ENCODE measurements at regions of chr4 and their contacts with region 1.

Region 1: GRCh38 chr4:140559696-140560095 is 9.1 kb downstream of the UCP1 start:
- DNase-seq: no peak
- ATAC-seq: no peak
- H3K4me3 ChIP-seq: no peak overlapping the region
- H3K4me1 ChIP-seq: no peaks in the 10 kb centered on the region
- CTCF ChIP-seq: no peak

Region 2: GRCh38 chr4:140296335-140297220 is 263.1 kb before region 1 on chr4:
- intact Hi-C with region 1: no loop called
- DNase-seq: peak in 1 of 3 donors; percentile 47
- ATAC-seq: peak; percentile 36
- H3K4me3 ChIP-seq: no peak overlapping the region
- H3K4me1 ChIP-seq: no peaks in the 10 kb centered on the region
- CTCF ChIP-seq: no peak

Region 3: DNA sequence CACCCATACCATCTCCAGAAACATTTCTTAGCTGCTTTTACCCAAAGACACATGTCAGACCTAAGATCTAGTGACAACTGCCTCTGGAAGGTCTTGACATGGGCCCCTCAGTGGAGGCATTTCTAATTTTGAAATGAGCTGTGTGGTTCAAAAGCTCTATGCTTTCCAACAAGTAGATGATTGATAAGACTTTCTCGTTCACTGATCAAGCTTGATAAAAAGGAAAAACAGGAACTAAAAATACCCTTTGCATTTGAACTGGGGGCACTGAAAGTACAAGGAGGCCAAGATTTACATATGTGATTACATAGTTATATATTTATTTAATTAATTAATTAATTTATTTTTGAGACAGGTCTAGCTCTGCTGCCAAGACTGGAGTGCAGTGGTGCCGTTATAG is 247.6 kb before region 1 on chr4:
- intact Hi-C with region 1: no loop called
- DNase-seq: no peak
- ATAC-seq: no peak
- H3K4me3 ChIP-seq: no peak overlapping the region
- H3K4me1 ChIP-seq: no peaks in the 10 kb centered on the region
- CTCF ChIP-seq: no peak

Region 4: DNA sequence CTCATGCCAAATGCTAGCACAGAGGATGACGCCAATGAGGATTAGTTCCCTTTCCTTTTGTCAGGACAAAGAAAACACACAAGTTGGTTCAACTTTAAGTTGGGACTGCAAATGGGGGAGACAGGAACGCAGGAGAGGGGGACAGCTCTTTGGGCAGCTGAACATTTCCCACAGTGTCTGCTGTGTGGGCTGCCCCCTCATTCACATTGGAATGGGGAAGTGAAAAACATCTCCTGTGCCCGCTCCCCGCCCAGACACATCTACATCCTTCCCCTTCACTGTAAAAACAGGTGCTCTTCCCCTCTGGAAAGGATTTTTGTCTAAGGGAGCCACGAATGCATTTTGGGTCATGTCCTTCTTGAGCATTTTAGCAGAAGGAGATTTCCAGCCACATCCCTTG is 241.0 kb after region 1 on chr4:
- intact Hi-C with region 1: loop called in 1 of 2 experiments (anchors 5 kb)
- DNase-seq: no peak
- ATAC-seq: no peak
- H3K4me3 ChIP-seq: no peak overlapping the region
- H3K4me1 ChIP-seq: no peaks in the 10 kb centered on the region
- CTCF ChIP-seq: no peak

Measured in mucosa of descending colon (tissue), 3 donors.